Thyroid gland (tissue), 4 donors: ENCODE measurements at regions of chr17 and their contacts with region 1.

Region 1: DNA sequence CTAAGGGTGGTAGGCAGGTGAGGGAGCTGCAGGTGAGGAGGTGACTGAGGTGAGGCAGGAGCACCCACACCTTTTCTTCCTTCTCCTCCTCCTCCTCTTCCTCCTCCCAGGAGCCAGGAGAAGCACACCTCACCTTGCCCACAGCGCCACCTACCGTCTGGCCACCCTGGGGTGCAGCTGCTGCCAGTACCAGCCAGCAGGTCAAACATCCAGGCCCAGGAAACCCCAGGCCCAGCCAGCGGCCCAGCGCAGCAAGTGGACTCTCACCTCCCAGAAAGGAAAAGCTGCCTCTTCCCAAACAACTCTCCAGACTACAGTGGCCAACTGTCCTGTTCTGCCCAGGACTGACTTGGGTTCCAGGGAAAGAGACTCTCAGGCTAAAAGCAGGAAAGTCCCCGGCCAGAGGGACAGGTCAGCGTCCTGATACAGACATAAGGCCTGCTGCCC is 22.7 kb downstream of the PEMT start:
- DNase-seq: peak; percentile 73
- H3K4me3 ChIP-seq: no peak overlapping the region
- H3K27ac ChIP-seq: peak overlapping the region in 2 of 3 donors; percentile 76 to 79
- H3K4me1 ChIP-seq: peaks cover 29 to 51% of the 10 kb centered on the region in 2 donors
- H3K27me3 ChIP-seq: no peaks in the 10 kb centered on the region
- CTCF ChIP-seq: peak in 5 of 6 experiments; percentile 34 to 72 (median 65)
- POLR2A ChIP-seq: no peak

Region 2: GRCh38 chr17:17356149-17356930 is 212.4 kb before region 1 on chr17:
- intact Hi-C with region 1: loop called (anchors 5 kb)
- DNase-seq: peak; percentile 88 to 89
- H3K4me3 ChIP-seq: no peak overlapping the region
- H3K27ac ChIP-seq: peak overlapping the region in 2 of 3 donors; percentile 3 to 20
- H3K4me1 ChIP-seq: peaks cover 0 to 15% of the 10 kb centered on the region in 2 donors
- H3K27me3 ChIP-seq: no peaks in the 10 kb centered on the region
- CTCF ChIP-seq: peak; percentile 99 to 100 (median 100)
- POLR2A ChIP-seq: no peak

Region 3: GRCh38 chr17:17496189-17497064 is 72.3 kb before region 1 on chr17 and contains the start of gene RASD1:
- intact Hi-C with region 1: loop called (anchors 5 kb)
- DNase-seq: peak; percentile 91
- H3K4me3 ChIP-seq: peak within 1 kb of the TSS; percentile 9 to 80 (median 76)
- H3K27ac ChIP-seq: peak within 1 kb of the TSS; percentile 85 to 96 (median 94)
- H3K4me1 ChIP-seq: peaks cover 7 to 18% of the 10 kb centered on the region in 2 donors
- H3K27me3 ChIP-seq: no peaks in the 10 kb centered on the region
- CTCF ChIP-seq: peak; percentile 31 to 99 (median 94)
- POLR2A ChIP-seq: peak; percentile 99 to 100
- total RNA-seq, gene RASD1: 114 to 149 (median 141) TPM

Region 4: GRCh38 chr17:17605729-17606088 is 36.9 kb after region 1 on chr17:
- intact Hi-C with region 1: no loop called
- DNase-seq: peak; percentile 53 to 56
- H3K4me3 ChIP-seq: no peak overlapping the region
- H3K27ac ChIP-seq: peak overlapping the region; percentile 43 to 58 (median 52)
- H3K4me1 ChIP-seq: peaks cover 9 to 20% of the 10 kb centered on the region in 2 donors
- H3K27me3 ChIP-seq: no peaks in the 10 kb centered on the region
- CTCF ChIP-seq: no peak
- POLR2A ChIP-seq: no peak

Region 5: DNA sequence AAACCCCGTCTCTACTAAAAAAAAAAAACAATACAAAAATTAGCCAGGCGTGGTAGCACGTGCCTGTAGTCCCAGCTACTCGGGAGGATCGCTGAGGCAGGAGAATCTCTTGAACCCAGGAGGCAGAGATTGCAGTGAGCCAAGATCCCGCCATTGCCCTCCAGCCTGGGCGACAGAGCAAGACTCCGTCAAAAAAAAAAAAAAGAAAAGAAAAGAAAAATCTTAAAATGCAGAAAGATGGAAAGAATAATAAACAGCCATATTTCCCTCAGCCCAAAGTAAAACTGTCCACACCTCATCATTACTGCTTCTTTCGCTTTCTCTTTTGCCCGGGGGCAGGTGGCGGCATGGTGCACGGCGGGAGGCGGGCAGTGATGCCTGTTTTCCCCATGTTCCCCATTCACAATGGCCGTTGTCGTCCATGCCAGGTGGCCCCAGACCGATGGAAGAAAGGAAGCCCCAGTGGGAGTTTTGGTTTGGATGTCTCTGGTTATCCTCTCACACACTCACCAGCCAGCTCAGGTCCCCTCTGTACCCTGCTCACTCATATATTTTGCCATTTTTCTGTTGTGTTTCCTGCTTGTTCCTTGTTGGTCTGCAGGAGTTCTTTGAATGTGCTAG is 59.7 kb after region 1 on chr17:
- intact Hi-C with region 1: no loop called
- DNase-seq: no peak
- H3K4me3 ChIP-seq: no peak overlapping the region
- H3K27ac ChIP-seq: no peak overlapping the region
- H3K4me1 ChIP-seq: no peaks in the 10 kb centered on the region
- H3K27me3 ChIP-seq: no peaks in the 10 kb centered on the region
- CTCF ChIP-seq: no peak
- POLR2A ChIP-seq: no peak

Region 6: GRCh38 chr17:17641621-17642409 is 73.0 kb after region 1 on chr17:
- intact Hi-C with region 1: loop called (anchors 5 kb)
- DNase-seq: peak; percentile 85 to 91
- H3K4me3 ChIP-seq: no peak overlapping the region
- H3K27ac ChIP-seq: peak overlapping the region; percentile 2 to 52 (median 52)
- H3K4me1 ChIP-seq: peaks cover 5 to 11% of the 10 kb centered on the region in 2 donors
- H3K27me3 ChIP-seq: no peaks in the 10 kb centered on the region
- CTCF ChIP-seq: peak; percentile 77 to 97 (median 92)
- POLR2A ChIP-seq: no peak